ENCODE measurements at regions of chr6 and their contacts with region 1.

Region 1: GRCh38 chr6:35583893-35584688 is 71.4 kb upstream of the TULP1 start:
- DNase-seq: peak; percentile 83 to 85
- H3K4me3 ChIP-seq: no peak overlapping the region
- H3K27ac ChIP-seq: peak overlapping the region; percentile 74 to 97 (median 96)
- H3K4me1 ChIP-seq: peaks cover 63 to 74% of the 10 kb centered on the region in 2 donors
- H3K27me3 ChIP-seq: no peaks in the 10 kb centered on the region
- CTCF ChIP-seq: peak; percentile 44 to 95 (median 83)
- POLR2A ChIP-seq: peak in 1 of 2 donors; percentile 74

Region 2: DNA sequence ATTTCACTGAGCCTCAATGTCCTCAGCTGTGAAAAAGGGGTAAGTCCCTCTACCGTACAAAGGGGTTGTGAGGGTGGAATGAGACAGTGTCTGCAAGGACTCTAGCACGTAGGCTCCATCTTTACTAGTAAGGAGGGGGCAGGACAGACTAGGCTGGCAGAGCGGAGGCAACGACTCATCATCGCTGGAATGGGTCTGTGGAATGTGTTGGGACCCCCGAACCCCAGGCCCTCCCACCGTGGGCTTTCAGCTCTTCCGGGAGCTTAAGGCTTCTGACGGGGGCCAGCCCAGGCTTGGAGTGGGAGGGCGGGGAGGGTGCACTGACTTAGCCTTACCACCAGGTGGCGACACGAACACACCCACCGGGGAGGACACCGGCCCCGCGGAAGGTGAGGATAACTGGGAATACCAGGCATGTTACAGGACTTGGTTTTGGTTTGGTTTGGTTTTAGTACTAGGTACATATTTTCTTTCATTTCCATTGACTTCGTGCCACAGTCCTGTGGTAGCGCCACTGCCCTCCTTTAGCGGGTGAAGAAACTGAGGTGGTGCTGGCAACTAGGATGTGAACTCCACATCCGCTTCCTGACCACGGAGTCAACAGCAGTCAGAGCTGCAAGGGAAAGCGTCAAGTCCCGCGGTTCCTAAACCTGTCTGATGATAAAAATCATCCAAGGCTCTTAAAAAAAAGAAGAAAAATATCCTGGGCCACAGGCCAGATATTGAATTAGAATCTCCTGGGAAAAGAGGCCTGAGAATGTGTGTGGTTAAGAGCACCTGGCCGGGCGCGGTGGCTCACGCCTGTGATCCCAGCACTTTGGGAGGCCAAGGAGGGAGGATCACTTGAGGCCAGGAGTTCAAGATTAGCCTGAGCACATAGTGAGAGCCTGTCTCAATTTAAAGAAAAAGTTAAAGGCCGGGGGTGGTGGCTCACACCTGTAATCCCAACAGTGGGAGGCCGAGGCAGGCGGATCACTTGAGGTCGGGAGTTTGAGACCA is 61.1 kb before region 1 on chr6:
- intact Hi-C with region 1: loop called (anchors 5 kb)
- DNase-seq: peak; percentile 73 to 81
- H3K4me3 ChIP-seq: no peak overlapping the region
- H3K27ac ChIP-seq: peak overlapping the region in 1 of 3 donors; percentile 10
- H3K4me1 ChIP-seq: peaks cover 0 to 10% of the 10 kb centered on the region in 2 donors
- H3K27me3 ChIP-seq: no peaks in the 10 kb centered on the region
- CTCF ChIP-seq: peak; percentile 94 to 100 (median 96)
- POLR2A ChIP-seq: no peak

Region 3: GRCh38 chr6:35688581-35689322 is 104.7 kb after region 1 on chr6 and contains the start of gene FKBP5:
- intact Hi-C with region 1: loop called (anchors 5 kb)
- DNase-seq: peak; percentile 98 to 99
- H3K4me3 ChIP-seq: peak within 1 kb of the TSS; percentile 50 to 98 (median 94)
- H3K27ac ChIP-seq: peak within 1 kb of the TSS; percentile 94 to 100 (median 99)
- H3K4me1 ChIP-seq: peaks cover 19 to 25% of the 10 kb centered on the region in 2 donors
- H3K27me3 ChIP-seq: no peaks in the 10 kb centered on the region
- CTCF ChIP-seq: no peak
- POLR2A ChIP-seq: peak; percentile 98 to 100
- total RNA-seq, gene FKBP5: 239 to 600 (median 253) TPM

Region 4: GRCh38 chr6:35736253-35736894 is 152.3 kb after region 1 on chr6:
- intact Hi-C with region 1: loop called (anchors 5 kb)
- DNase-seq: peak; percentile 76 to 81
- H3K4me3 ChIP-seq: no peak overlapping the region
- H3K27ac ChIP-seq: peak overlapping the region in 1 of 3 donors; percentile 99
- H3K4me1 ChIP-seq: peaks cover 20 to 37% of the 10 kb centered on the region in 2 donors
- H3K27me3 ChIP-seq: no peaks in the 10 kb centered on the region
- CTCF ChIP-seq: peak; percentile 66 to 93 (median 86)
- POLR2A ChIP-seq: no peak